ENCODE measurements at regions of chrX and their contacts with region 1.

Region 1: DNA sequence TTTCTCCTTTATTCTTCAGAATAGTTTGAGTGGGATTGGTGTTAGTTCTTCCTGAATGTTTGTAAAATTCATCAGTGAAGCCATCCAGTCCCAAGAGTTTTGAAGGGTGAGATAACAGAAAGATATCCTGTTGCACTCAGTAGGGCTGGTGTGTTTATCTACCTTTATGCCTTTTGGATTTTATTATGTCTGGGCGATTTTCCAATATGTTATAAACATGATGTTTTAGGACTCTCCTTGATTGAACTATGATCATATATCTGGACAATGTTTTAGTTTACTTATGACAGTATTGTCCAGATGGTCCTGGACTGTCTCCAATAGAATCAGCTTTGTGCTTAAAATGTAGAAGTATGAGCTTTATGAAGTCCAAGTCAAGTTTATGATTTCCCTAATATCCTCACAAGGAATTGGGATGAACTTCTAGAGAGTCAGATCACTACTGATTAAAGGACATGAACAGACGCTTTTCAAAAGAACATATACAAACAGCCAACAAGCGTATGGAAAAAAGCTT is 77.6 kb upstream of the ITM2A start:
- DNase-seq: no peak
- ATAC-seq: no peak
- H3K4me3 Mint-ChIP-seq: no peak overlapping the region
- H3K27ac Mint-ChIP-seq: no peak overlapping the region
- H3K4me1 Mint-ChIP-seq: no peaks in the 10 kb centered on the region
- H3K27me3 Mint-ChIP-seq: no peaks in the 10 kb centered on the region

Region 2: GRCh38 chrX:78886550-78886949 is 558.2 kb before region 1 on chrX:
- CTCF ChIA-PET with region 1: no interaction called
- POLR2A ChIA-PET with region 1: no interaction called
- intact Hi-C with region 1: loop called in 1 of 2 experiments (anchors 10 kb)
- DNase-seq: no peak
- ATAC-seq: peak; percentile 61
- H3K4me3 Mint-ChIP-seq: no peak overlapping the region
- H3K27ac Mint-ChIP-seq: peak overlapping the region; percentile 47
- H3K4me1 Mint-ChIP-seq: peaks cover 7% of the 10 kb centered on the region
- H3K27me3 Mint-ChIP-seq: no peaks in the 10 kb centered on the region

Region 3: DNA sequence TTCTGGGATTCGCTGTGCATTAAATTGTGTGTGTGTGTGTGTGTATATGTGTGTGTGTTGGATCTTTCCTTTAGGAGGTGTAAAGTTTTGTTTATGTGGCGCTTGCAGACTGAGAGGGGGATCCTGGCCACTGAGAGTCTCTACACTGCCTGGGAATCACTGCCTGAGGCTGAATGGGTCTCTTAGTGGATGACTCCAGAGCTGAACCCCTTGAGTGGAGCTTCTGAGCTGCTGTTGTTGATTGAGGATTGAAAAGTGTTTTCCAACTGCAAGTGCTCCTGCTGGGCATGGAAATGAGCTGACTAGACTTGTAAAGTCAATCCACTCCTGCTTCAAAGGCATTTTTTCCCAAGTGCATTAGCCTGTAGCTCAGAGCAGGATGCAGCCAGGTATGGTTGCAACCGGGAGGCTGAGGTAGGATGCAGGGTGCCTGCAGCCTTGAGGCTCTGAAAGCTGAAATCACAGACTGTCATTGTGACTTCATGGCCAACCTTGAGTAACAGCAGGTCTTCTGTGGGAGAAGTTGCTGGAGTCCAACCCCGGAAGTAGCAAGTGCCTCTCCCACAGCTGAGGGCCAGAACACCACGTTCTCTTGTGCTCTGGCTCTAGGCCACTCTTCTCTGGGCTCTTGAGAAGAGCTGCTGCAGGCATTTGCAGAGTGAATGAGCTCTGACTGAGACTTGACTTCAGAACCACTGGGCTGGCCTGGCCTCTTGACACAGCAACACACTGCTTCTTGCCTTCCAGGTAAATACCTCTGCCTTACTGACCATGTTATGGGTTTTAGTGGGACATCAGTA is 569.6 kb after region 1 on chrX and contains the start of gene TBX22:
- CTCF ChIA-PET with region 1: no interaction called
- POLR2A ChIA-PET with region 1: no interaction called
- intact Hi-C with region 1: no loop called
- DNase-seq: no peak
- ATAC-seq: no peak
- H3K4me3 Mint-ChIP-seq: no peak within 1 kb of the TSS
- H3K27ac Mint-ChIP-seq: no peak within 1 kb of the TSS
- H3K4me1 Mint-ChIP-seq: no peaks in the 10 kb centered on the region
- H3K27me3 Mint-ChIP-seq: peaks cover 3% of the 10 kb centered on the region
- total RNA-seq, gene TBX22: not detected

Region 4: DNA sequence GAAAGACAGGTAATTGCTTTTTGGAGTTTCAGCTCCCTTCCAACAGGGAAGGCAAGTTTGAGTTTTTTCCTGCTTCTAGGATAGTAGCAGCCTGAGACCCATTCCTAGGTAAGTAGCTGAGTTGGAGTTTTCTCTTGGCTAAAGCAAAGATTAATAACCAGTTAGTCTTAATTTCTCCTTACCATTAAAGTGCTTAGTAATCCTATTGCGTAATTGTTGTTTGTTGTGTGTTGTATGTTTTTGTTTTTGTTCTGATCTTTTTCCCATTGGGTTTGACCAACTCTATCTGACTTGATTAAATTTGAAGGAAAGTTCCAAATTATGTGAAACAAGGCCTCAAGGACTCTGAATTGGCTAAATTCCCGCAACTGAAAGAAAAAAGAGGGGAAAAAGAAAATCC is 653.3 kb after region 1 on chrX:
- CTCF ChIA-PET with region 1: no interaction called
- POLR2A ChIA-PET with region 1: no interaction called
- intact Hi-C with region 1: no loop called
- DNase-seq: no peak
- ATAC-seq: no peak
- H3K4me3 Mint-ChIP-seq: no peak overlapping the region
- H3K27ac Mint-ChIP-seq: no peak overlapping the region
- H3K4me1 Mint-ChIP-seq: no peaks in the 10 kb centered on the region
- H3K27me3 Mint-ChIP-seq: no peaks in the 10 kb centered on the region

Measured in activated CD4-positive, alpha-beta T cell treated with anti-CD3 and anti-CD28 coated beads for 36 hours (primary cell).